ENCODE measurements at regions of chrX and their contacts with region 1.

Region 1: DNA sequence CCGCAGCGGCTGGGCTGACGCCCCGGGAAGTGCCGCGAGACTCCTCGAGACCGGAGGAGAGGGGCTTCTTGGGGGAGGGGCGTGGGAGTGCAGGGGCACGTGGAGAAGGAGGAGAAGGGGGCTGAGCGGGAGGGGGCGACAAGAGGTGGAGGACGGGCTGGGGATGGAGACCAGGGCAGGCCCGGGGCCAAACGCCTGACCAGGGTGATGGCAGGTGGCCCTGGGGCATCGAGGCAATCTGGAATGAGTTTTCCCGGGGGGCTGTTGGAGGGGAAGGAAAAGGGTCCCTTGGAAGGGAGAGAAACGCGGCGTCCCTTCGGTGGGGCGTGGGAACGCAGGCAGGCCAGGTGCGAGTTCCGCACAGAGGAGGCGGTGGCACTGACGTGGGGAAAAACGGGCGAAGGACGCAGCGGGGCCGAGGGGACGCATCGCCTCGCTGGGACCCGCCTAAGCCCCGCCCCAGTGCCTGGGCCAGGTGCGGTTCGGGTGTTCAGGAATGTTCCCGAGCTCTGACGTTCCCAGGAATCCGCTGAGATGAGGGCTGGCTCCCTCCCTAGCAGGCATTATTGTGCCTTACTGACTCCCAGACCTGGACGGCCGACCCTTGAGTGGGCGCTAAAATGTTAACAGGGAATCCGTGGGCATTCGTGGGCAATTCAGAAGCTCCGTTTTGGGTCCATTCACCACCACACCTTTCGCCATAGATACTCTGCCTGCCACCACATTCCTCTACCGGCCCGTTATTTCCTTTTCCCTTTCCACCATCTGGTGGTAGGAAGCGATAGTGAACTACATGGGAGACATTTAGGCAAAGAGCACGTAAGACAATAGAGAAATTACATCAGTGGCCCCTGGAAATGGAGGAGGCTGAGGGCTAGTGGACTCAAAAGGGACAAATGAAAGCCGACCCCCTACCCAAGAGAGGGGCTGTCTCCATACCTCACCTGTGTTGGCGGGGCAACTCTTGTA is 795 bp upstream of the SH3KBP1 start:
- DNase-seq: peak; percentile 75
- ATAC-seq: peak; percentile 78

Region 2: GRCh38 chrX:19372170-19372546 is 516.0 kb before region 1 on chrX:
- intact Hi-C with region 1: loop called (anchors 5 kb)
- DNase-seq: no peak
- ATAC-seq: peak; percentile 75

Region 3: GRCh38 chrX:19513383-19513782 is 374.8 kb before region 1 on chrX:
- intact Hi-C with region 1: no loop called
- DNase-seq: no peak
- ATAC-seq: no peak

Region 4: GRCh38 chrX:19544693-19545305 is 343.4 kb before region 1 on chrX:
- intact Hi-C with region 1: loop called (anchors 2 kb)
- DNase-seq: no peak
- ATAC-seq: peak; percentile 64

Region 5: GRCh38 chrX:19593690-19594089 is 294.5 kb before region 1 on chrX:
- intact Hi-C with region 1: loop called (anchors 2 kb)
- DNase-seq: no peak
- ATAC-seq: no peak

Region 6: GRCh38 chrX:19739683-19740082 is 148.5 kb before region 1 on chrX:
- intact Hi-C with region 1: loop called (anchors 2 kb)
- DNase-seq: no peak
- ATAC-seq: no peak

Region 7: GRCh38 chrX:19863212-19863856 is 24.9 kb before region 1 on chrX:
- intact Hi-C with region 1: no loop called
- DNase-seq: no peak
- ATAC-seq: no peak